Heart left ventricle (tissue), 16 donors: ENCODE measurements at regions of chr3 and their contacts with region 1.

Region 1: GRCh38 chr3:66276705-66277274 is 56.0 kb downstream of the SLC25A26 start:
- DNase-seq: peak in 3 of 5 donors; percentile 39 to 54 (median 41)
- ATAC-seq: peak in 2 of 4 donors; percentile 42 to 64
- H3K4me3 ChIP-seq: no peak overlapping the region
- H3K27ac ChIP-seq: no peak overlapping the region
- H3K4me1 ChIP-seq: peaks cover 0 to 5% (median 0%) of the 10 kb centered on the region in 12 donors
- H3K27me3 ChIP-seq: no peaks in the 10 kb centered on the region
- CTCF ChIP-seq: peak; percentile 50 to 86 (median 71)
- POLR2A ChIP-seq: no peak

Region 2: GRCh38 chr3:66336333-66336766 is 59.6 kb after region 1 on chr3:
- intact Hi-C with region 1: no loop called
- DNase-seq: no peak
- ATAC-seq: peak in 3 of 4 donors; percentile 27 to 91 (median 42)
- H3K4me3 ChIP-seq: no peak overlapping the region
- H3K27ac ChIP-seq: peak overlapping the region in 6 of 12 donors; percentile 19 to 39 (median 23)
- H3K4me1 ChIP-seq: peaks cover 0 to 26% (median 6%) of the 10 kb centered on the region in 12 donors
- H3K27me3 ChIP-seq: no peaks in the 10 kb centered on the region
- CTCF ChIP-seq: no peak
- POLR2A ChIP-seq: no peak

Region 3: DNA sequence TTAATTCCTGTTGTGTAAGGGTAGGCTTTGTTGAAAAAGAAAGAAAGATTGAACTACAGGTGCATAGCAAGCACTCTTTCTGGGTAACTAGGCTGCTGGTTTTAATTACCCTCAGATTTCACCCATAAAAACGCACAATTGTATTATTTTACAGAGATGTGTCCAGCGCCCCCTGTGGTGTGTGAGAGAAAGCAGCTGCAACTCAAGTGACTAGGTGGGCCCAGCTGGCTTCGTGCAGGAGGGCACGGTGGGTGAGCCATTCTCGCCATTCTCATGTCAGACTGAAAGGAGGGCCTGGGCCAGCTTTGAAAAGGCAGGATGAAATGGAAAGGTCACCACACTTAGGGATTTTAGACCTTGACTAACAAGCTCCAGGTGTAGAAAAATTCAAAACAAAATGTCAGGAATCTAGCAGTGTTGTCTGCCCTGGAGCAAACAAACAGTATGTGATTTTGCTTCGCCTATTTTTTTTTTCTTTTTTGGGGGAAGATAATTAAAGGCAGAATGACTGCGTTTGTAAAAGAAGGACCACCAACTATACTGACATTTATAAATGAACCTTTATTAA is 101.5 kb after region 1 on chr3:
- intact Hi-C with region 1: loop called in 6 of 10 experiments (anchors 2 to 5 kb)
- DNase-seq: no peak
- ATAC-seq: no peak
- H3K4me3 ChIP-seq: no peak overlapping the region
- H3K27ac ChIP-seq: peak overlapping the region in 2 of 12 donors; percentile 2 to 27
- H3K4me1 ChIP-seq: peaks cover 0 to 18% (median 9%) of the 10 kb centered on the region in 12 donors
- H3K27me3 ChIP-seq: no peaks in the 10 kb centered on the region
- CTCF ChIP-seq: peak in 11 of 12 donors; percentile 18 to 54 (median 41)
- POLR2A ChIP-seq: no peak

Region 4: GRCh38 chr3:66483406-66483906 is 206.7 kb after region 1 on chr3:
- intact Hi-C with region 1: loop called in 1 of 10 experiments (anchors 10 kb)
- DNase-seq: peak; percentile 53 to 74 (median 67)
- ATAC-seq: peak; percentile 54 to 78 (median 60)
- H3K4me3 ChIP-seq: peak overlapping the region in 1 of 12 donors; percentile 11
- H3K27ac ChIP-seq: peak overlapping the region; percentile 70 to 98 (median 86)
- H3K4me1 ChIP-seq: peaks cover 24 to 99% (median 90%) of the 10 kb centered on the region in 12 donors
- H3K27me3 ChIP-seq: no peaks in the 10 kb centered on the region
- CTCF ChIP-seq: no peak
- POLR2A ChIP-seq: no peak

Region 5: GRCh38 chr3:66816090-66816761 is 539.4 kb after region 1 on chr3:
- intact Hi-C with region 1: loop called (anchors 2 to 5 kb)
- DNase-seq: no peak
- ATAC-seq: peak; percentile 58 to 92 (median 82)
- H3K4me3 ChIP-seq: no peak overlapping the region
- H3K27ac ChIP-seq: no peak overlapping the region
- H3K4me1 ChIP-seq: peaks cover 0 to 3% (median 0%) of the 10 kb centered on the region in 12 donors
- H3K27me3 ChIP-seq: no peaks in the 10 kb centered on the region
- CTCF ChIP-seq: peak; percentile 45 to 77 (median 68)
- POLR2A ChIP-seq: no peak